CD4-positive, alpha-beta memory T cell (primary cell): ENCODE measurements at regions of chr7 and their contacts with region 1.

Region 1: GRCh38 chr7:131040467-131040932 is 287.2 kb upstream of the MKLN1 start:
- DNase-seq: peak; percentile 61 to 69 (median 65)
- H3K4me3 ChIP-seq: no peak overlapping the region
- H3K4me3 Mint-ChIP-seq: peak overlapping the region in 6 of 8 donors; percentile 25 to 74 (median 42)
- H3K27ac ChIP-seq: peak overlapping the region; percentile 10
- H3K27ac Mint-ChIP-seq: peak overlapping the region; percentile 39 to 81 (median 77)
- H3K4me1 ChIP-seq: peaks cover 49% of the 10 kb centered on the region
- H3K4me1 Mint-ChIP-seq: peaks cover 49 to 77% (median 62%) of the 10 kb centered on the region in 4 donors
- H3K27me3 ChIP-seq: no peaks in the 10 kb centered on the region
- H3K27me3 Mint-ChIP-seq: no peaks in the 10 kb centered on the region

Region 2: DNA sequence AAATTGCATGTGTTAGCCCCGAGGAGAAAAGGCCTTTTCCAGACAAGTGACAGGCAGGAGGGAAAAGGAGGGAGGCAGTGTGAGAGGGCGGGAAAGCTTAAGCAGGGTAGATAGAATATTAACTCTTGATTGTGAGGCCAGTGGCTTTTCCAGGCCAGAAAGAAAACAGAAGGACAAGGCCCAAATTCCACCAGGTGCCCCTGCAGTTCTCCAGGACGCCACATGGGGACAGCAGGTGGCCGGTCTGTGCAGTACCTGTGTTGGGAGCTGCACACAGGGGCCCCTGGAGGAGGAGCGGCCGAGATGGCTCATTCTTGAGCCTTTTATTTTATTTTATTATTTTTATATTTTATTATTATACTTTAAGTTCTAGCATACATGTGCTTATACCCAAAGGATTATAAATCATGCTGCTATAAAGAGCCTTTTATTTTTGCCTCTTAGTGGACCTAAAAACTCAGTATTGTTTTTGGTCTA is 165.2 kb before region 1 on chr7:
- CTCF ChIA-PET with region 1: interaction called, 10 read pairs
- POLR2A ChIA-PET with region 1: no interaction called
- intact Hi-C with region 1: no loop called
- DNase-seq: peak; percentile 39 to 58 (median 41)
- H3K4me3 ChIP-seq: no peak overlapping the region
- H3K4me3 Mint-ChIP-seq: no peak overlapping the region
- H3K27ac ChIP-seq: no peak overlapping the region
- H3K27ac Mint-ChIP-seq: peak overlapping the region in 4 of 7 donors; percentile 67 to 89 (median 69)
- H3K4me1 ChIP-seq: peaks cover 15% of the 10 kb centered on the region
- H3K4me1 Mint-ChIP-seq: peaks cover 29 to 56% (median 37%) of the 10 kb centered on the region in 4 donors
- H3K27me3 ChIP-seq: no peaks in the 10 kb centered on the region
- H3K27me3 Mint-ChIP-seq: no peaks in the 10 kb centered on the region

Region 3: GRCh38 chr7:130891254-130892094 is 149.0 kb before region 1 on chr7:
- CTCF ChIA-PET with region 1: interaction called, 150 read pairs
- POLR2A ChIA-PET with region 1: interaction called, 10 read pairs
- intact Hi-C with region 1: no loop called
- DNase-seq: no peak
- H3K4me3 ChIP-seq: no peak overlapping the region
- H3K4me3 Mint-ChIP-seq: no peak overlapping the region
- H3K27ac ChIP-seq: no peak overlapping the region
- H3K27ac Mint-ChIP-seq: peak overlapping the region in 4 of 7 donors; percentile 22 to 81 (median 62)
- H3K4me1 ChIP-seq: peaks cover 46% of the 10 kb centered on the region
- H3K4me1 Mint-ChIP-seq: peaks cover 44 to 83% (median 70%) of the 10 kb centered on the region in 4 donors
- H3K27me3 ChIP-seq: no peaks in the 10 kb centered on the region
- H3K27me3 Mint-ChIP-seq: no peaks in the 10 kb centered on the region

Region 4: GRCh38 chr7:131007394-131008330 is 32.8 kb before region 1 on chr7:
- CTCF ChIA-PET with region 1: interaction called, 6 read pairs
- POLR2A ChIA-PET with region 1: interaction called, 6 read pairs
- intact Hi-C with region 1: loop called (anchors 2 kb)
- DNase-seq: peak; percentile 65 to 75 (median 68)
- H3K4me3 ChIP-seq: peak overlapping the region in 1 of 2 donors; percentile 13
- H3K4me3 Mint-ChIP-seq: peak overlapping the region in 7 of 8 donors; percentile 13 to 86 (median 69)
- H3K27ac ChIP-seq: peak overlapping the region; percentile 57
- H3K27ac Mint-ChIP-seq: peak overlapping the region; percentile 84 to 99 (median 94)
- H3K4me1 ChIP-seq: peaks cover 86% of the 10 kb centered on the region
- H3K4me1 Mint-ChIP-seq: peaks cover 66 to 94% (median 82%) of the 10 kb centered on the region in 4 donors
- H3K27me3 ChIP-seq: no peaks in the 10 kb centered on the region
- H3K27me3 Mint-ChIP-seq: no peaks in the 10 kb centered on the region

Region 5: DNA sequence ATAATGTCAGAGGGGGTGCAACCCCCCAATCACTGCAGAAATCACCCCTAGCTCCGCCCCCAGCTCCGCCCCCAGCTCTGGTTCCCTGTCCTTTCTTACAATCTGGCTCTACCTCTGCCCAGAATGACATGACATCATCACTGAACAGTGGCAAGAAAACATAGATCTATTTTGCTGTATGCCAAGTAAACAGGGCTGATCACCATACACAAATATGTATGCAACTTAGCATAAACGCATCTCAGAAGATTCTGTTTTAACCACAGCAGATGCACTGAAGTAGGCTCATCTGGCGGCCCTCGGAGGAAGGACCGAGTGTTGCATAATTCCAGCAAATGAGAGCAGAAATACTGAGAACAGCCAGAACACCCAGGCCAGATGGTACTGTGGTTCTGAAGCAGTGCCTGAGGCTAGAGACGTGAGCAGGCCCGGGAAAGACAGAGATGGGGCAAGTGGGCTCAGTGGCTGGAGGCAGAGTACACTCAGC is 13.2 kb before region 1 on chr7:
- CTCF ChIA-PET with region 1: interaction called, 14 read pairs
- POLR2A ChIA-PET with region 1: interaction called, 3 read pairs
- intact Hi-C with region 1: no loop called
- DNase-seq: peak; percentile 33 to 73 (median 50)
- H3K4me3 ChIP-seq: no peak overlapping the region
- H3K4me3 Mint-ChIP-seq: peak overlapping the region; percentile 66 to 86 (median 72)
- H3K27ac ChIP-seq: peak overlapping the region; percentile 31
- H3K27ac Mint-ChIP-seq: peak overlapping the region; percentile 84 to 96 (median 92)
- H3K4me1 ChIP-seq: peaks cover 99% of the 10 kb centered on the region
- H3K4me1 Mint-ChIP-seq: peaks cover 69 to 92% (median 82%) of the 10 kb centered on the region in 4 donors
- H3K27me3 ChIP-seq: no peaks in the 10 kb centered on the region
- H3K27me3 Mint-ChIP-seq: no peaks in the 10 kb centered on the region

Region 6: DNA sequence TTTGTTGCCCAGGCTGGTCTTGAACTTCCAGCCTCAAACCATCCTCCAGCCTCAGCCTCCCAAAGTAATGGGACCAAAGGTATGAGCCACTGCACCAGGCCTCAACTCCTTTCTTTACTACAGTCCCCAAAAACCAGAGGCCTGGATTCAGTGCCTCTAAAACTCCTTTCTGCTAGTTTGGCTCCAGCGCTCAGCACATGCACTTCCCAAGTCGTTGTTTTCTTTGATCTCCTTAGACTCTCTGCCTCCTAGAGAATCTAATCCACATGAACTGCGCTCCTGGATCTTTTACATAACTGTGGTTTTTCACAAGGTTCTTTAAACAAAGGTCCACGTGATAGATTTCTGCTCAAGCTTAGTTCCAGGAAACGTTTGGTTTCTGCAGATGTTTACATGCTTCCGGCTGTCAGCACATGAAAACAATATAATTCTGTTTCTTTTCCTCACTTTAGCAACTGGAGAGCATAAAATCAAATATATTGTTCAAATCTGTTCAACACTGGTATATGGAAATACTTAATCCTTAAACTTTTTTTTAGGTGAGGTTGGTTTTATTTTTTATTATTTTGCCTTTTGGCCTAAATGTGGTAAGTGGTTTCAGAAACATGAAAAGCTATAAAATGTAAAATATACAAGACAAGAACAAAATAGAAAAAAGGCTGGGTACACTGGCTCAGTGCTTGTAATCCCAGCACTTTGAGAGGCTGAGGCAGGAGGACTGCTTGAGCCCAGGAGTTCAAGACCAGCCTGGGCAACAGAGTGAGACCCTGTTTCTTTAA is 16.7 kb after region 1 on chr7:
- CTCF ChIA-PET with region 1: interaction called, 20 read pairs
- POLR2A ChIA-PET with region 1: interaction called, 4 read pairs
- intact Hi-C with region 1: loop called (anchors 2 kb)
- DNase-seq: peak; percentile 58 to 79 (median 70)
- H3K4me3 ChIP-seq: no peak overlapping the region
- H3K4me3 Mint-ChIP-seq: peak overlapping the region; percentile 49 to 93 (median 81)
- H3K27ac ChIP-seq: peak overlapping the region; percentile 64
- H3K27ac Mint-ChIP-seq: peak overlapping the region; percentile 92 to 100 (median 97)
- H3K4me1 ChIP-seq: peaks cover 95% of the 10 kb centered on the region
- H3K4me1 Mint-ChIP-seq: peaks cover 53 to 87% (median 68%) of the 10 kb centered on the region in 4 donors
- H3K27me3 ChIP-seq: no peaks in the 10 kb centered on the region
- H3K27me3 Mint-ChIP-seq: no peaks in the 10 kb centered on the region

Region 7: GRCh38 chr7:131302876-131303707 is 262.6 kb after region 1 on chr7:
- CTCF ChIA-PET with region 1: interaction called, 11 read pairs
- POLR2A ChIA-PET with region 1: no interaction called
- intact Hi-C with region 1: no loop called
- DNase-seq: peak in 4 of 5 donors; percentile 24 to 28 (median 25)
- H3K4me3 ChIP-seq: no peak overlapping the region
- H3K4me3 Mint-ChIP-seq: no peak overlapping the region
- H3K27ac ChIP-seq: no peak overlapping the region
- H3K27ac Mint-ChIP-seq: peak overlapping the region in 1 of 7 donors; percentile 25
- H3K4me1 ChIP-seq: no peaks in the 10 kb centered on the region
- H3K4me1 Mint-ChIP-seq: peaks cover 0 to 2% (median 0%) of the 10 kb centered on the region in 4 donors
- H3K27me3 ChIP-seq: no peaks in the 10 kb centered on the region
- H3K27me3 Mint-ChIP-seq: no peaks in the 10 kb centered on the region

Region 8: GRCh38 chr7:131699323-131699722 is 658.8 kb after region 1 on chr7:
- CTCF ChIA-PET with region 1: no interaction called
- POLR2A ChIA-PET with region 1: no interaction called
- intact Hi-C with region 1: no loop called
- DNase-seq: no peak
- H3K4me3 ChIP-seq: no peak overlapping the region
- H3K4me3 Mint-ChIP-seq: no peak overlapping the region
- H3K27ac ChIP-seq: no peak overlapping the region
- H3K27ac Mint-ChIP-seq: no peak overlapping the region
- H3K4me1 ChIP-seq: no peaks in the 10 kb centered on the region
- H3K4me1 Mint-ChIP-seq: no peaks in the 10 kb centered on the region
- H3K27me3 ChIP-seq: no peaks in the 10 kb centered on the region
- H3K27me3 Mint-ChIP-seq: peaks cover 4 to 6% of the 10 kb centered on the region in 2 donors